ENCODE measurements at regions of chr2 and their contacts with region 1.

Region 1: DNA sequence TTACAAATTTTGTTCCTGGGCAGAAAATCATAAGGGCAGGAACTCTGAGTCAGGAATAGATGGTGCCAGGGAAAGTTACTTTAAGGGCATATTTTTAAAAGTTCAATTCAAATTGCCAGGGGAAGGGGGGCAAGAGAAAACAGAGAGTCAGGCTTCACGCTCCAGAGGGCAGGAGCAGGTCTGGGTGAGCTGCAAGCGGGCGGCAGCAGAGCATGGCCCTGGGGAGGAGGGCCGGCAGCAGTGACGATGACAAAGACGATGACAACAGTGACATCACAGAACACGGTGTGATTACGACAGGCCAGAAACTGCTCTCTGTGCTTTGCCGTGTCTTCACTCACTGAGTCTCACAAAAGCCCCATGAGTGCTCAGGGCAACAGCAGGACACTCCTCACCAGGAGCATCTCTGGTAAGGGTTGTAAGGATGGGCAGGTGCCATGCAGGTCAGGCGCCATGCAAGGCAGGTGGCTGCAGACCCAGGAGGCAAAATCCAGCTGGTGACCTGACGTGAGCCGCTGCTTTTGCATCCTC is 23.3 kb downstream of the CHST10 start:
- DNase-seq: no peak
- H3K4me3 ChIP-seq: no peak overlapping the region
- H3K27ac ChIP-seq: no peak overlapping the region
- H3K4me1 ChIP-seq: no peaks in the 10 kb centered on the region
- H3K27me3 ChIP-seq: no peaks in the 10 kb centered on the region
- CTCF ChIP-seq: no peak
- POLR2A ChIP-seq: no peak

Region 2: GRCh38 chr2:99841749-99842148 is 552.4 kb before region 1 on chr2:
- intact Hi-C with region 1: no loop called
- DNase-seq: no peak
- H3K4me3 ChIP-seq: no peak overlapping the region
- H3K27ac ChIP-seq: no peak overlapping the region
- H3K4me1 ChIP-seq: no peaks in the 10 kb centered on the region
- H3K27me3 ChIP-seq: no peaks in the 10 kb centered on the region
- CTCF ChIP-seq: no peak
- POLR2A ChIP-seq: no peak

Region 3: DNA sequence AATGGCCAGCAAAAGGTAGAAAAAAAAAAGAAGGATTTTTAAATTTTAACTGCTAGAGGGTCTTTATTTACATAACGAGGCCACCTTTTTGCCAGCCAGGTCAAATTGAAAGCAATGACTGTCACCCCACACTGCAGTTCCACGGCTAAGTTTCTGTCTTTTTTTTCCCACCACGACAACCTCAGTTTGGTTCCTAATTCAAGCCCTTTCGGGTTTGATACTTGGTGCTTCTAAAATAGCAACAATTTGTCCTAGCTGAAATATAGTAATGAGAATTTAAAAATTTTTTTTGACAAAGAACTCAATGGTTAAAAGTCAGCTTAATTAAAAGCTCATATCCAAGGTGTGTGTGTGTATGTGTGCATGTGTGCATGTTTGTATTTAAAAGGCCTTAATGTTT is 59.7 kb after region 1 on chr2:
- intact Hi-C with region 1: loop called (anchors 2 kb)
- DNase-seq: no peak
- H3K4me3 ChIP-seq: no peak overlapping the region
- H3K27ac ChIP-seq: no peak overlapping the region
- H3K4me1 ChIP-seq: no peaks in the 10 kb centered on the region
- H3K27me3 ChIP-seq: no peaks in the 10 kb centered on the region
- CTCF ChIP-seq: no peak
- POLR2A ChIP-seq: no peak

Measured in breast epithelium (tissue), 4 donors.